ENCODE measurements at regions of chr1 and their contacts with region 1.

Region 1: DNA sequence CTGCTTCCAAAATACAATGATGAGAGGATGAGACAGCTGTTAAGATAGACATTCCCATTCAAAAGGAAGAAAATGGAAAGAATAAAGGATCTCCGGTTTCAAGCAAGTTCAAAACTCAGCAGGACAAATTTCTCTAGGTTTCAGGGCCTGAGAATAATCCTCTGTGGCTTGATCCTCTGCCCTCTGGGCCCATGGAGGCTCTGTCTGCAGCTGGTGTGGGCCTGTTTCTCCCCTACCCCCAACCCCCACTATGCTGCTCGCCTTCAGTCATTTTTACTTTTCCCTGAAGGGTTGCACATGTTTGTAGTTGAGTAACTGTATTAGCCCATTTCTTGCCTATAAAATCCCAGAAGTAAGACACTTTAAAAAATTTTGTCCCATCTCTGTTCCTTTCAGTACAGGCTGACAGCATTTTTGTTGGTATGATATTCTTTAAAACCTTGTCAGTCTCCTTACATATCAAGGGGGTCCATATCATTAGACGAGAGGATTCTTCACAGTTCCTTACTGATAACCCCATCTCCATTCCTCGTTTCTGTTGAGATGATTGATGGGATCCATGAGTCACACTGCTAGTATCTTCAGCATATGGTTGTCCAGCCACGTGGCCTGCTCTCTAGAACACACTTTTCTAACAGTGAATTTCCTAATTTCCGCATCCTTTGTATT is 10.5 kb downstream of the ZMYM4 start:
- DNase-seq: no peak
- H3K4me3 ChIP-seq: no peak overlapping the region
- H3K27ac ChIP-seq: no peak overlapping the region
- H3K27me3 ChIP-seq: no peaks in the 10 kb centered on the region
- CTCF ChIP-seq: no peak

Region 2: DNA sequence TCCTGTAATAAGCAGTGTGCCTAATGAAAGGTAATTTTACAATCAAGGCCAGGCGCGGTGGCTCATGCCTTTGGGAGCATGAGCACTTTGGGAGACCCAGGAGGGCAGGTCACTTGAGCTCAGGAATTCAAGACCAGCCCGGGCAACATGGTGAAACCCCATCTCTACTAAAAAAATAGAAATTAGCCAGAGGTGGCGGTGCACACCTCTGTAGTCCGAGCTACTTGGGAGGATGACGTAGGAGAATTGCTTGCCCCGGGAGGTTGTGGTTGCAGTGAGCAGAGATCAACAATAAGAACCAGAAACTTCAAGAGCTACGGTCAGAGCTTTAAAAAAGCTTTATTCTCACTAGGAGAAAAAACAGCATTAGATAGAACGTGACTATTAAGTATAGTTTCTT is 121.1 kb before region 1 on chr1:
- intact Hi-C with region 1: no loop called
- DNase-seq: no peak
- H3K4me3 ChIP-seq: no peak overlapping the region
- H3K27ac ChIP-seq: no peak overlapping the region
- H3K27me3 ChIP-seq: no peaks in the 10 kb centered on the region
- CTCF ChIP-seq: no peak

Region 3: GRCh38 chr1:35557292-35558063 is 278.5 kb after region 1 on chr1 and contains the starts of genes KIAA0319L and NCDN:
- intact Hi-C with region 1: loop called in 1 of 2 experiments (anchors 10 kb)
- DNase-seq: peak; percentile 93 to 97 (median 96)
- H3K4me3 ChIP-seq: peak within 1 kb of the TSS; percentile 76 to 100 (median 96)
- H3K27ac ChIP-seq: peak within 1 kb of the TSS; percentile 78 to 100 (median 99)
- H3K27me3 ChIP-seq: no peaks in the 10 kb centered on the region
- CTCF ChIP-seq: peak in 21 of 56 donors; percentile 1 to 52 (median 27)
- total RNA-seq, gene KIAA0319L: 66.0 to 125 (median 85.3) TPM
- total RNA-seq, gene NCDN: 209 to 881 (median 618) TPM